ENCODE measurements at regions of chr1 and their contacts with region 1.

Region 1: GRCh38 chr1:197924516-197925123 is 7.4 kb downstream of the LHX9 start:
- DNase-seq: no peak

Region 2: GRCh38 chr1:197521118-197521739 is 403.4 kb before region 1 on chr1:
- intact Hi-C with region 1: loop called (anchors 10 kb)
- DNase-seq: no peak

Region 3: DNA sequence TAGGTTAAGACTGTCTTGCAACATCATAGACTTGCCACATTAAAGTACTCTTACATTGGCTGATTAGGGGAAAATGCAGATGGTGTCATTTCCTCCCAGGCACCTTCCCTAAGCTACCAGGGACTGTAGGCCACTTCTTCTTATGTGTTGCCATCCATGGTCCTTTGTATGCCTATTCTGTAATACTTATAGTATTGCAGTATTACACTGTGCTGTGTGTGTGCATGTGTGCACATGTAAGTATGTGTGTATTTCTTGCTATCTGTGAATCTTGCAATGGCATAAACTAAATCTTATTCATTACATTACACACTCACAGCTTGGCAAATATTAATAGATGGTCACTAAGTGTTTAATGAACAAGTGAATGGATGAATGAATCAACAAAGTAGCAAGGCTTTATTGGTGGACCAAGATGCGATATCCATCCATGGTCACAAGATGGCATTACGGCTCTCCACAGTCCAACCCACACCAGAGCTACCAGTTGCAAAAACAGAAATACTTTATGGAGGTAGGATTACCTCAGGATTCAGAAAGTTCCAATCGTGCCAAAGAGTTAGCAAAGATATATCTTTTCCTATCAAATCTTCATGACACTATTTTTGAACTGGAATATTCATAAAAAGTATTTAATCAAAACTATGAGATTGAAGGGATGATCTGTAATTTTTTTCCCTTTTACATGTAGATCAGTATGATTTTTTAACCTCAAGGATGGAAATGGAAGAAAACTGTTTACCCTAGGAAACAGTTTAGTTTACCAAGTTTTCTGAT is 309.5 kb before region 1 on chr1:
- intact Hi-C with region 1: loop called (anchors 10 kb)
- DNase-seq: peak in 5 of 10 donors; percentile 7 to 49 (median 14)

Region 4: DNA sequence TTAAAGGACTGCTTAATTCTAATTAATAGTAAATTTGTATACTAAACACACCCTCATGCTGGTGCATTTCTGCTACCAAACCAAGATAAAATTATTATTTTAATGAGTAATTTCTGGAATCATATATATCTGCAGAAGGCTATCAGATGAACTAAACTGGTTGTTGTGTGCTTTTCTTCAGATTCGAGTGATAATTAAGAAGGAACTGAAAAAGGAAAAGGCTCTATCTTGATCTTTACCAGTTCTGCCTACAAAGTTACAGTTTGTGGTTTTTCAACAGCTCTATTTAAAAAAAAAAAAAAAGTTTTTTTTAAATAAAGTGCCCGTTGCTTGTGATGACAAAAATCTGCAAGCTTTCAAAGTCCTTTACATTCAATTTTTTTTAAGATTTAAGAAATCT is 163.0 kb before region 1 on chr1:
- intact Hi-C with region 1: no loop called
- DNase-seq: no peak